OCI-LY7 (cell line): ENCODE measurements at regions of chr15 and their contacts with region 1.

Region 1: GRCh38 chr15:23857028-23857641 is 170.0 kb upstream of the NDN start:
- DNase-seq: no peak
- H3K4me3 ChIP-seq: no peak overlapping the region
- H3K27ac ChIP-seq: no peak overlapping the region
- H3K4me1 ChIP-seq: no peaks in the 10 kb centered on the region
- CTCF ChIP-seq: peak; percentile 67

Region 2: GRCh38 chr15:23648920-23649515 is 208.1 kb before region 1 on chr15:
- CTCF ChIA-PET with region 1: no interaction called
- POLR2A ChIA-PET with region 1: no interaction called
- intact Hi-C with region 1: loop called (anchors 5 kb)
- DNase-seq: peak; percentile 20
- H3K4me3 ChIP-seq: no peak overlapping the region
- H3K27ac ChIP-seq: no peak overlapping the region
- H3K4me1 ChIP-seq: no peaks in the 10 kb centered on the region
- CTCF ChIP-seq: peak; percentile 78